ENCODE measurements at regions of chr1 and their contacts with region 1.

Region 1: GRCh38 chr1:245045087-245045881 is 109.5 kb upstream of the KIF26B start:
- DNase-seq: no peak

Region 2: DNA sequence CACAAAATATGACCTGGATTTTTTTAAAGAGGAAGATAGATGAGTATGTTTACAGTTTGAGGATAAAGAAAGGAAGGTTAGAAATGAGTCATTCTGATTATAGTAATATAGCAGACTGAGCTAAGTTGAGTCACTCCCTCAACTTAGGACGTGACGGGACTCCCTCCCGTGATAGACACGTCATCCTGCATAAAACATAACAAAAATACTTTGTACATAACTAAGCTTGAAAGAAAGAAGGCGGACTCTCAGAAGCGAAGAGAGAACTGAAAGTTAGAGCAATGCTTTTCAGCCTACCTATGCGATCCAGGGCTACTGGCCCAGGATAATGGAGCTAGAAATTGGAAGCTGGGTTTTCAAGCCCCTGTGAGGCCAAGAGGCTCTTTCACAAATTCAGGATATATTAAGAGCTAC is 445.3 kb before region 1 on chr1:
- intact Hi-C with region 1: loop called (anchors 5 kb)
- DNase-seq: no peak

Region 3: DNA sequence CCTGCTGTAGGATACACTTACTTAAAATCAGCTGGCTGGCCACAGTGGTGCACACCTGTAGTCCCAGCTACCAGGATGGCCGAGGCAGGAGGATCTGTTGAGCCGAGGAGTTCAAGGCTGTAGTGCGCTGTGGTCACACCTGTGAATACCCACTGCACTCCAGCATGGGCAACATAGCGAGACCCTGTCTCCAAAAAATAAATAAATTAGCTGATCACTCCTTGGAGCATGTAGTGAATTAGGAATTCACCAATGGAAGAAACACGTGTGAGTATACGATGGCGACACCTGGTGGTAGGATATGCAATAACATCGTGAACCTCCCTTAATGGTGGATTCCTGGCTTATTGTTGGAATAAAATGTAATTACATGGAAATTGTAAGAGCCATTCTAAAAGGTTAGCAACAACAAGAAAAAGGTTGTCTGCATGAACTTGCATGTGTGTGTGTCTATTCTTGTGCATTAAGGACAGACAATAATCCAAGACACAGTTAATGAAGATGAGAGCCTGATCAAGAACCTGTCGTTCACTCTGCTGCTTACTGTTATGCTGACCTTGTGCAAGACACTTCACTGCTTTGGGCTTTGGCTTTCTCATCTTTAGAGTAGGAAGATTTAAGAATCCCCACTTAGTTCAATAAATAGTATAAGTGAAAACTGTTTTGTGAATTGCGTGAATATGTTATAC is 248.4 kb before region 1 on chr1:
- intact Hi-C with region 1: loop called (anchors 1 kb)
- DNase-seq: no peak

Region 4: DNA sequence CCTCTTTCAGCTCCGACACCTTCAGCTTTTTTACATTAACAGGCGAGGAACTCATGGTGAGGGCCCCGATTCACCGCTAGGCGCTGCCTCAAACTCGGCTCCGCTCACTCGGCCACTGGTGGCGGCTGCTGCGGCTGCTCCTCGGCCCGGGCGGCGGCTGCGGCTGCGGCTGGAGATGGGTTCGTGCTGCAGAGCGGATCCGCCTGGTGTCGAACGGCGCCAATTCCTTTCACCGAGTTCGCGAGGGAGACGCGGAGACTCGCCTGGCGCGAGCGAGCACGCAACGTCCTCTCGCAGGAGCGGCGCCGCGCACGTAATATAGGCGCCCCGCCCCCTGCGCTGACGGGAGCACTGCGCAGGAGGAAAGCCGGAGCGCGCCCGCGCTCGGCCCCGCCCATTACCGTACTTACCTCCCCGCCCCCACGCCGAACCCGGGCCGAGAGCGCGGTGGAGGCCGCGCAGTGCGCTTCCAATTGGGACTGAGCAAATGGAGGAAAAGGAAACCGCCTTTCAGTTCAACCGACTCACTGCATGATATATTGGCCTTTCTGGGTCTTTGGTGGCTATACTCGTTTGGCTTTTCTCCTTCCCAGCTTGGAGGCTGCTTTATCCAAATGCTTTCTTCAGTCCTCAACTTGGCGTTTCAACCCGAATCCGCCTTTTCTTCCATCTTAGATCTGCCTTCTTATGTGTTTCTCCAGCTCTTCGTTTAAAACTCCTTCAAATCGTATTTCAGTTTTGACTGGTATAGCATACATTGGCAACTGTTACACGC is 180.8 kb before region 1 on chr1 and contains the start of gene HNRNPU:
- intact Hi-C with region 1: loop called (anchors 2 kb)
- DNase-seq: peak; percentile 98
- total RNA-seq, gene HNRNPU: 192 TPM

Region 5: DNA sequence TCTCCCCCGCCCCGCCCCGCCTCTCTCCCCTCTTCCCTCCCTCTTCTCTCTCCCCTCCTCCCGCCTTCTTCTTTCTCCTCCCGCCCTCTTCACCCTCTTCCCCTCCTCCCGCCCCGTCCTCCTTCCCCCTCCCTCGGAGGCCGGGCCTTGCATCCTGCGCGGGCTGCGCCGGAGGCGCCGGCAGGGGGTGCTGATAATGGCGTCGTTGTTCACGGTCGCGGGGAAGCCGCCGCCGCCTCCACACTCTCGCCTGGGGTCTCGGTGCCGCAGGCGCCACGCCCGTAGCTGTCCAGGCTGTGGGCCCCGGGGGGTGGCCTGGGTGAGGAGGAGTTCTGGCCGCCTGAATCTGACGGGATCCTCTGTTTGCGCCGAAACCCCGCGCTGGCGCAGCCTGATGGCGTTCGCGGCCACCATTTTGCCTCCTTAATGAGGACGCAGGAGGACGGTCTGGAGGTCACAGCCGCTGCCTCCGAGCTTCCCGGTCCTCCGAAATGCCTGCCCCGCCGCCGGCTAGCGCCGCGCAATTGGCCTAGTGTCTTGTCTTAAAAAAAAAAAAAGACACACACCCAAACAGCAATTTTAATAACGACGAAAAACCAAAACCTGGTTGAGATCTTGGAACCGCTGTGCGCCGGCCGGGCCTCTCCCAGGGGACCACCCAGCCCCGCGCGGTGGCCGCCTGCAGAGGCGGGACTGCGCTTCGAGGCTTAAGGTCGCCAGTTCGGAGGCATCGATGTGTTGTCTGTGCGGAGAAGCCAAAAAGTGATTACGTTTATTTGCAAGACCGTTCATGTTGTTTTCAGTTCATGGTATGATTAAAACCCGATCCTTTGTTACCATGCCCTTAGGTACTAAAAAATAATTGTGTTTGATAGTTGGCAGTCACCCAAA is 74.4 kb before region 1 on chr1:
- intact Hi-C with region 1: loop called (anchors 5 kb)
- DNase-seq: peak; percentile 96

Region 6: DNA sequence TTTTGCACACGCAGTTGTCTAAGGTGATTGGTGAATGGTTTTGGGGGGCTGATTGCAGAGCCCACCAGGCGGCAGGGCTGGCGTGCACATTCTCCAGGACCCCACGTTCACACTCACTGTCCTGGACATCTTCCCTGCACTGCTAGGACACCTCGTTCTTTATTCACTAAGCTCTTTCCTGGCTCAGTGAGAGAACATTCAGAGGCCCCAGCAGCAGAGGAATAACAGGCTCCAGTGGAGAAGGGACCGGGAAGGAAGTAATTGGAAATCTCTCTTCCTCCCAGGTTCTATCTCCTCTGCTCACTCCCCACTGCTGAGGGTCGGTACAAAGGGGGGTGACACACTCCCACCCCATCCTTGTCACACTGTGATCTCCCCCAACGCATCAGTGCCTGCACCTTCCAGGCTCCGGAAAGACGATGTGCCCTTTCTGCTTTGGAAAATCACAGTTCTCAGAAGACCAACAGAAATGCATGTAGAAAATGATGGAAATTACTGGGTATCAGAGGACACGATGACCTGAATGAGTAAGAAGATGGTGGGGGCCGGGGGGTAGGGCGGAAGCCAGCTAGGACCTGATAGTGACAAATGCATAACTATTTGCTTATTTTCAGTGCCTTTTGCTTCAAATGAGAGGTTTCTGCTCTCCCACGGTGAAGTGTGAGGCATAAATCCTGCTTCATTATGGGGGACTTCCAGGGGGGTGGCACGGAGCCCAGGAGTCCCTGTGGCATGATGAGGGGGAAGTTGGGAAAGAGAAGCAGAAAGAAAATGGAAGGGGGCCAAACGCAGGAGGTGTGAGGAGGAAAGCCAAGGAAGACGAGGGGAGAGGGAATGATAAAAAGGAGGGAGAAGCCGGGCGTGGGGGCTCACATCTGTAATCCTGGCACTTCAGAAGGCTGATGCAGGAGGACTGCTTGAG is 84.3 kb after region 1 on chr1:
- intact Hi-C with region 1: no loop called
- DNase-seq: no peak

Measured in cardiac septum (tissue), 1 donor.